Naive thymus-derived CD4-positive, alpha-beta T cell (primary cell): ENCODE measurements at regions of chr2 and their contacts with region 1.

Region 1: GRCh38 chr2:119826370-119826961 is 66.7 kb downstream of the PTPN4 start:
- DNase-seq: peak in 7 of 9 donors; percentile 10 to 53 (median 28)
- ATAC-seq: peak; percentile 82
- H3K4me3 ChIP-seq: no peak overlapping the region
- H3K4me3 Mint-ChIP-seq: no peak overlapping the region
- H3K27ac ChIP-seq: no peak overlapping the region
- H3K27ac Mint-ChIP-seq: peak overlapping the region in 4 of 9 donors; percentile 32 to 67 (median 45)
- H3K4me1 ChIP-seq: peaks cover 0 to 8% of the 10 kb centered on the region in 2 donors
- H3K4me1 Mint-ChIP-seq: peaks cover 22 to 76% (median 59%) of the 10 kb centered on the region in 7 donors
- H3K27me3 ChIP-seq: no peaks in the 10 kb centered on the region
- H3K27me3 Mint-ChIP-seq: no peaks in the 10 kb centered on the region

Region 2: GRCh38 chr2:119641562-119642258 is 184.8 kb before region 1 on chr2:
- CTCF ChIA-PET with region 1: interaction called, 7 read pairs
- POLR2A ChIA-PET with region 1: interaction called, 3 read pairs
- intact Hi-C with region 1: loop called (anchors 1 to 5 kb)
- DNase-seq: peak; percentile 42 to 77 (median 64)
- ATAC-seq: peak; percentile 95
- H3K4me3 ChIP-seq: no peak overlapping the region
- H3K4me3 Mint-ChIP-seq: no peak overlapping the region
- H3K27ac ChIP-seq: no peak overlapping the region
- H3K27ac Mint-ChIP-seq: no peak overlapping the region
- H3K4me1 ChIP-seq: peaks cover 0 to 4% of the 10 kb centered on the region in 2 donors
- H3K4me1 Mint-ChIP-seq: peaks cover 0 to 13% (median 5%) of the 10 kb centered on the region in 7 donors
- H3K27me3 ChIP-seq: no peaks in the 10 kb centered on the region
- H3K27me3 Mint-ChIP-seq: peaks cover 0 to 14% (median 0%) of the 10 kb centered on the region in 5 donors

Region 3: GRCh38 chr2:119702918-119703401 is 123.5 kb before region 1 on chr2:
- CTCF ChIA-PET with region 1: interaction called, 5 read pairs
- POLR2A ChIA-PET with region 1: no interaction called
- intact Hi-C with region 1: loop called (anchors 1 kb)
- DNase-seq: peak; percentile 26 to 69 (median 53)
- ATAC-seq: peak; percentile 92
- H3K4me3 ChIP-seq: peak overlapping the region; percentile 16
- H3K4me3 Mint-ChIP-seq: no peak overlapping the region
- H3K27ac ChIP-seq: no peak overlapping the region
- H3K27ac Mint-ChIP-seq: peak overlapping the region in 2 of 9 donors; percentile 6 to 56
- H3K4me1 ChIP-seq: peaks cover 6 to 9% of the 10 kb centered on the region in 2 donors
- H3K4me1 Mint-ChIP-seq: peaks cover 0 to 23% (median 13%) of the 10 kb centered on the region in 7 donors
- H3K27me3 ChIP-seq: no peaks in the 10 kb centered on the region
- H3K27me3 Mint-ChIP-seq: peaks cover 0 to 4% (median 0%) of the 10 kb centered on the region in 5 donors

Region 4: DNA sequence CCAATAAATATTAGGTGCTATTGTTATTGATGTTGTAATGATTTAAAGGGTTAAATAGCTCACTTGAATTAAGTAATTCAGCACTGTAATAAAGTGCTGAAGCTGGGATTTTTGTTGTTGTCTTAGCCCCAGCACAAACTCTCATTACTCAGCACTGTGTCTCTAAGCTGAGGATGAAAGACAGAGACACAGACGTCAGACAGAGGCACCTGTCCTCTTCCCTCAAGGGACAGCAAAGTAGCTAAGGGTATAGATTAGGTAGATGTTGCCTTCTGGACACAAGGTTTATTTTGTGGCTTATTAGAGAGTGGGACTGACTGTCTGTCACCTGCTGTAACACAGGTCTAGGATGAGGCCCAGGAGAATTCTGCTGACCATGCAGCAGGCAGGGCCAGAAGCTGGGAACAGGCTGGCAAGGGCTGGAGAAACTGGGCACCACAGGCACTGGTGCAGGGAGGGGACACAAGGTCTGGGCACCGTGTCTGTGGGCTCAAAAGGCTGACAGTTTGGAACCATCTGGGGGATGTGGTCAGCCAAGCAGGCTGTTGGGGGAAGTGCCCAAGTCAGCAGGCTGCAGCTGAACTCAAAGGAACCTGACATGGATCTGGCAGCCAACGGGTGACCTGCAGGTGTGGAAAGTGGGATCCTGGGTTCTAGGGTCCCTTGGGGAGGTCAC is 86.7 kb before region 1 on chr2:
- CTCF ChIA-PET with region 1: interaction called, 10 read pairs
- POLR2A ChIA-PET with region 1: no interaction called
- intact Hi-C with region 1: no loop called
- DNase-seq: no peak
- ATAC-seq: no peak
- H3K4me3 ChIP-seq: no peak overlapping the region
- H3K4me3 Mint-ChIP-seq: no peak overlapping the region
- H3K27ac ChIP-seq: no peak overlapping the region
- H3K27ac Mint-ChIP-seq: no peak overlapping the region
- H3K4me1 ChIP-seq: no peaks in the 10 kb centered on the region
- H3K4me1 Mint-ChIP-seq: peaks cover 0 to 2% (median 0%) of the 10 kb centered on the region in 7 donors
- H3K27me3 ChIP-seq: no peaks in the 10 kb centered on the region
- H3K27me3 Mint-ChIP-seq: peaks cover 0 to 12% (median 0%) of the 10 kb centered on the region in 5 donors

Region 5: DNA sequence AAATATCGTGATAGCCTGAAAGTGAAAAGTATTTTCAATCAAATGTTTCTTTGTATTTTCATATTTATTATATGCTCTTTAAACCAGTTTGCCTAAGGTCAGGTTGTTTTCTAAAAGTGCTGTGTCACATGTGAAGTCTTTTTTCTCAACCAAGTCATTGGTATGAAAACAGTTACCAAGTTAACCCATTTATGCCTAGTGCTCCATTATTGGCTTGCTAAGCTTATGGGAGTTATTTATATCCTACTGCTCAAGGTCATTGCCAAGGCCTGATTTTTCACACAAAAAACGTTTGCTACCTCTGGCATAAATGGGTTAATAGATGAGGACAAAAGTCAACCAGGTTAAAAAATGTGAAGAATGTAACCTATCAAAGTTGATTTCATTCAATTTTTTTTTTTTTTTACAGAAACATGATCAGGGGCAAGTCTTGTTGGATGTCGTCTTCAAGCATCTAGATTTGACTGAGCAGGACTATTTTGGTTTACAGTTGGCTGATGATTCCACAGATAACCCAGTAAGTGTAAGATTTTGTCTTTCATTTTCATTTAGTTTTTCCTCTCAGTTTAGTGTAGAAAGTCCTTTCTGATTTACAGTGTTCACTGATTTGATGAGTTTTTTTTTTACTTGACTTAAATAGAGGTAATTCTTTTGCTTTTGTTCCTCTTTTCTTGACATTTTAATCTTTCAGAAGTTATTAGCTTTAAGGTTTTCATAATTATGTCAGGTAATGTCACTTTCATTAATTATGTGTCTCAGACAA is 35.8 kb after region 1 on chr2:
- CTCF ChIA-PET with region 1: no interaction called
- POLR2A ChIA-PET with region 1: no interaction called
- intact Hi-C with region 1: loop called in 1 of 2 experiments (anchors 2 kb)
- DNase-seq: no peak
- ATAC-seq: no peak
- H3K4me3 ChIP-seq: no peak overlapping the region
- H3K4me3 Mint-ChIP-seq: peak overlapping the region in 2 of 10 donors; percentile 36 to 55
- H3K27ac ChIP-seq: no peak overlapping the region
- H3K27ac Mint-ChIP-seq: peak overlapping the region in 2 of 9 donors; percentile 37 to 79
- H3K4me1 ChIP-seq: peaks cover 14 to 15% of the 10 kb centered on the region in 2 donors
- H3K4me1 Mint-ChIP-seq: peaks cover 36 to 91% (median 84%) of the 10 kb centered on the region in 7 donors
- H3K27me3 ChIP-seq: no peaks in the 10 kb centered on the region
- H3K27me3 Mint-ChIP-seq: no peaks in the 10 kb centered on the region